OCI-LY7 (cell line): ENCODE measurements at regions of chr6 and their contacts with region 1.

Region 1: DNA sequence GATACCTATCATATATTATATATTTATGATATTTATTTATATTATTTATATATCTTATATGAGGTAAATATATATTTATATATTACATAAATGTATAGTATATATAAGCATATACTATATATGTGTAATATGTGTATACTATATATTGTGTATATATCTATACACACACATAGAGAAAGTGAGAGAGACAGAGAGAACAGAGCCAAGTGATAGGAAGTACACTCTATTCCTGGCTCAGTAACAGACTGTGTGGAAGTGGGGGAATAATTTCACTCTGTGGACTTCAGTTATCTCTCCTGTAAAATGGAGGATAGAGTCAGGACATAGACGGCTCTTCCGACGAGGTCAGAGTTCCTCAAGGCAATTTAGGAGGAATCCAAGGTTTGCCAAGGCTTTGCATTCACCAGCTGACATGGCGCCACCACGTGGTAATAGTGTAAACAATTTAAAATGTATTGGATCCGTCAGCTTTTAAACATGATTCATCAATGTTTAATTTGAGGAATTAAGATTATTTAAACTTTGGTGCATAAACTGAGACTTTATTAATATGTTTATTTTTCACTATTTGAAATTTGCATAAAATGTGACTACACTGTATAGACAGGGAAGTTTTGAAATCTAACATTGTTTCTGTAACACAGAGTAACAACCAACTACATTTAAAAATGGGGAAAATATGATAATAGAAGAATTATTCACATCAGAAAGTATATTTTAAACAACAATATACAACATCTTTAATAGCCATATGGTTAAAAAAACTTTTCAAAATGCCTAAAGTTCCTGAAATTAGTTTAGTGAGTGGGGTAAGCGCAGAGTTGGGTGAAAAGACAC is 75.4 kb upstream of the TMEM244 start:
- DNase-seq: peak; percentile 61
- H3K4me3 ChIP-seq: no peak overlapping the region
- H3K27ac ChIP-seq: no peak overlapping the region
- H3K4me1 ChIP-seq: no peaks in the 10 kb centered on the region
- CTCF ChIP-seq: peak; percentile 97

Region 2: GRCh38 chr6:129774697-129775447 is 161.7 kb before region 1 on chr6:
- CTCF ChIA-PET with region 1: no interaction called
- POLR2A ChIA-PET with region 1: no interaction called
- intact Hi-C with region 1: loop called (anchors 10 kb)
- DNase-seq: peak; percentile 57
- H3K4me3 ChIP-seq: no peak overlapping the region
- H3K27ac ChIP-seq: no peak overlapping the region
- H3K4me1 ChIP-seq: no peaks in the 10 kb centered on the region
- CTCF ChIP-seq: peak; percentile 93